ENCODE measurements at regions of chr4 and their contacts with region 1.

Region 1: GRCh38 chr4:75673027-75673958 is at the start of gene G3BP2:
- DNase-seq: peak; percentile 98
- ATAC-seq: peak; percentile 96
- H3K4me3 Mint-ChIP-seq: peak within 1 kb of the TSS; percentile 98
- H3K27ac Mint-ChIP-seq: peak within 1 kb of the TSS; percentile 96
- H3K4me1 Mint-ChIP-seq: peaks cover 39% of the 10 kb centered on the region
- H3K27me3 Mint-ChIP-seq: no peaks in the 10 kb centered on the region
- total RNA-seq, gene G3BP2: 127 to 137 TPM

Region 2: DNA sequence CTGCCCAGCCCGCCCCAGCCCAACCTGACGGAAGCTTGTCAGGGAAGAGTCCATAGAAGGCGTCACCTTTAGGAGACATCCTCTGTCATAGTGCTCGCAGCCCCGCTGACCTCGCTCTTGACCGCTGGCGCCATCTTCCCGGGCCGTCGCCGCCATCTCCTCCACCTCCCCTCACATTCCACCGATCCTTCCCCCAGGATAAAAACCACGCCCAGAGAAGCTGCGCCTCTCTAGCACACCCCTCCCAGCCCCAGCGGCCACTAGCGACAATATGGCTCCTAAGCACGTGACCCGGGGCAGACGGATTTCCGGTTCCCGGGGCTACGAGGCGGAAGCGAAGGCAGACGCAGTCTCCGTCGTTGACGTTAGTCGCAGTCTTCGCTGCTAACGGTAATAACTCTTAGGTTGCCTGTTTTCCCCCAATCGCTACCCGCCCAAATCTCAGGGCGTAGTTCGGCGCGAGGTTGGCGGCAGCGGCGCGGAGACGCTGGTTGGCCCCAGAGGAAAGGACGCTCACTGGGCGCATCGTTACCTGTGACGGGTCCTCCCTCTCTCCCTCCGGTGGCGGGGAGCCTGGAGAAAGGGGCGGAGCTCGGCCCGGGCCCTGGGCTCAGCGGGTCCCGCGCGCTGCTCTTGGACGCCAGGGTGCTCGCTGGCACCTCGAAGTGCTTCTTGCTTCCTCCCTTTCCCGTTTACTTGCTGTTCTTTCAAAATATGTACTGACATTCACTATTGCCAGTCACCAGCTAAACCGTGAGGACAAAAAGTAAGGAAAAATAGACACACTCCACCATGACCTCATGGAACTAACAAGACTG is 159.0 kb before region 1 on chr4 and contains the starts of genes RCHY1 and THAP6:
- CTCF ChIA-PET with region 1: no interaction called
- POLR2A ChIA-PET with region 1: no interaction called
- intact Hi-C with region 1: loop called (anchors 1 kb)
- DNase-seq: peak; percentile 95
- ATAC-seq: peak; percentile 93
- H3K4me3 Mint-ChIP-seq: no peak within 1 kb of the TSS
- H3K27ac Mint-ChIP-seq: peak within 1 kb of the TSS; percentile 95
- H3K4me1 Mint-ChIP-seq: peaks cover 39% of the 10 kb centered on the region
- H3K27me3 Mint-ChIP-seq: no peaks in the 10 kb centered on the region
- total RNA-seq, gene RCHY1: 32.9 to 33.7 TPM
- total RNA-seq, gene THAP6: 18.4 TPM

Region 3: GRCh38 chr4:75653845-75654503 is 19.3 kb before region 1 on chr4:
- CTCF ChIA-PET with region 1: interaction called, 14 read pairs
- POLR2A ChIA-PET with region 1: interaction called, 9 read pairs
- intact Hi-C with region 1: loop called (anchors 1 kb)
- DNase-seq: no peak
- ATAC-seq: no peak
- H3K4me3 Mint-ChIP-seq: no peak overlapping the region
- H3K27ac Mint-ChIP-seq: peak overlapping the region; percentile 80
- H3K4me1 Mint-ChIP-seq: peaks cover 46% of the 10 kb centered on the region
- H3K27me3 Mint-ChIP-seq: no peaks in the 10 kb centered on the region

Region 4: GRCh38 chr4:75698162-75698962 is 25.1 kb after region 1 on chr4:
- CTCF ChIA-PET with region 1: no interaction called
- POLR2A ChIA-PET with region 1: no interaction called
- intact Hi-C with region 1: loop called in 1 of 2 experiments (anchors 2 kb)
- DNase-seq: peak; percentile 52
- ATAC-seq: peak; percentile 82
- H3K4me3 Mint-ChIP-seq: no peak overlapping the region
- H3K27ac Mint-ChIP-seq: peak overlapping the region; percentile 72
- H3K4me1 Mint-ChIP-seq: peaks cover 34% of the 10 kb centered on the region
- H3K27me3 Mint-ChIP-seq: no peaks in the 10 kb centered on the region

Region 5: GRCh38 chr4:75895744-75896314 is 222.5 kb after region 1 on chr4:
- CTCF ChIA-PET with region 1: no interaction called
- POLR2A ChIA-PET with region 1: no interaction called
- intact Hi-C with region 1: no loop called
- DNase-seq: peak; percentile 17
- ATAC-seq: peak; percentile 64
- H3K4me3 Mint-ChIP-seq: no peak overlapping the region
- H3K27ac Mint-ChIP-seq: no peak overlapping the region
- H3K4me1 Mint-ChIP-seq: no peaks in the 10 kb centered on the region
- H3K27me3 Mint-ChIP-seq: no peaks in the 10 kb centered on the region

Region 6: GRCh38 chr4:75989846-75990528 is 316.7 kb after region 1 on chr4:
- CTCF ChIA-PET with region 1: no interaction called
- POLR2A ChIA-PET with region 1: no interaction called
- intact Hi-C with region 1: loop called in 1 of 2 experiments (anchors 2 kb)
- DNase-seq: no peak
- ATAC-seq: no peak
- H3K4me3 Mint-ChIP-seq: peak overlapping the region; percentile 83
- H3K27ac Mint-ChIP-seq: peak overlapping the region; percentile 88
- H3K4me1 Mint-ChIP-seq: peaks cover 29% of the 10 kb centered on the region
- H3K27me3 Mint-ChIP-seq: no peaks in the 10 kb centered on the region

Measured in activated CD4-positive, alpha-beta T cell treated with anti-CD3 and anti-CD28 coated beads for 36 hours (primary cell).